ENCODE measurements at regions of chr17 and their contacts with region 1.

Region 1: GRCh38 chr17:41417576-41418015 is 6.8 kb downstream of the KRT37 start:
- DNase-seq: peak; percentile 65
- H3K4me3 ChIP-seq: no peak overlapping the region
- H3K27ac ChIP-seq: peak overlapping the region; percentile 40
- H3K4me1 ChIP-seq: peaks cover 48% of the 10 kb centered on the region
- H3K27me3 ChIP-seq: no peaks in the 10 kb centered on the region
- CTCF ChIP-seq: peak; percentile 51 to 66

Region 2: GRCh38 chr17:41456208-41456607 is 38.6 kb after region 1 on chr17:
- CTCF ChIA-PET with region 1: no interaction called
- dilution Hi-C with region 1: no loop called
- in situ Hi-C with region 1: no loop called
- intact Hi-C with region 1: loop called (anchors 5 kb)
- DNase-seq: no peak
- H3K4me3 ChIP-seq: no peak overlapping the region
- H3K27ac ChIP-seq: no peak overlapping the region
- H3K4me1 ChIP-seq: peaks cover 8% of the 10 kb centered on the region
- H3K27me3 ChIP-seq: no peaks in the 10 kb centered on the region
- CTCF ChIP-seq: peak in 1 of 2 donors; percentile 50

Region 3: GRCh38 chr17:41464682-41465081 is 47.1 kb after region 1 on chr17:
- CTCF ChIA-PET with region 1: no interaction called
- dilution Hi-C with region 1: no loop called
- in situ Hi-C with region 1: no loop called
- intact Hi-C with region 1: loop called (anchors 2 kb)
- DNase-seq: peak; percentile 96
- H3K4me3 ChIP-seq: no peak overlapping the region
- H3K27ac ChIP-seq: no peak overlapping the region
- H3K4me1 ChIP-seq: peaks cover 29% of the 10 kb centered on the region
- H3K27me3 ChIP-seq: no peaks in the 10 kb centered on the region
- CTCF ChIP-seq: no peak

Region 4: DNA sequence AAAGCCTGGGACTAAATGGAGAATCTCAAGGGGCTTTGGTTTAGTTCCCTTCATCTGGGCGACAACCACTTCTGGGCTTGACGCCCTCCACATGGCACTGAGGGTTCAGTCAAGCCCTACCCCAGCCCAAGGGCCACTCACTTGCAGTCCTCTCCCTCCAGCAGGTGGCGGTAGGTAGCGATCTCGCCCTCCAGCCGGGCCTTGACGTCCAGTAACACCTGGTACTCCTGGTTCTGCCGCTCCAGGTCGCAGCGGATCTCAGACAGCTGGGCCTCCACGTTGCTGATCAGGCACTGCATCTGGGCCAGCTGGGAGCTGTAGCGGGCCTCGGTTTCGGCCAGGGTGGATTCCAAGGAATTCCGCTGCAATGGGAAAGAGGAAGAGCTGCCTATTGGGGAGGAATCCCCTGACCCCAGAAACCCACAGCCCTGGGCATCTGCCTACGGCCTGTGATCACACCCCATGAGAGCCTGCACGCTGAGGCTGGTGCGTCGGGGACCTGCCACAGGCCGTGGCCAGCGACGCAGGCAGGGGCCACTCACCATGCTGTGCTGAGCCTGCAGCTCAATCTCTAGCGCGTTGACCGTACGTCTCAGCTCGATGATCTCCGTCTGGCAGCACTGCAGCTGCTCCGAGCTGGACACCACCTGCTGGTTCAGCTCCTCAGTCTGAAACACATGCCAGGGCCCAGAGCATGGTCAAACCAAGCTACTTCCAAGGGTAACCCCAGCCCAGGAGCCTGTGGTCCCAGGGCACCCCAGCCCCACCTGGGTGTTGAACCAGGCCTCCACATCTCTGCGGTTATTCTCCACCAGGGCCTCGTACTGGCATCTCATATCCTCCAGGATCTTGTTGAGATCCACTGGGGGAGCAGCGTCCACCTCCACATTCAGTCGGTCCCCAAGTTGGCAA is 69.5 kb after region 1 on chr17:
- CTCF ChIA-PET with region 1: no interaction called
- dilution Hi-C with region 1: no loop called
- in situ Hi-C with region 1: loop called in 1 of 2 experiments (anchors 5 kb)
- intact Hi-C with region 1: no loop called
- DNase-seq: no peak
- H3K4me3 ChIP-seq: no peak overlapping the region
- H3K27ac ChIP-seq: no peak overlapping the region
- H3K4me1 ChIP-seq: no peaks in the 10 kb centered on the region
- H3K27me3 ChIP-seq: no peaks in the 10 kb centered on the region
- CTCF ChIP-seq: peak in 1 of 2 donors; percentile 14

Measured in mammary epithelial cell (primary cell).